ENCODE measurements at regions of chr14 and their contacts with region 1.

Region 1: GRCh38 chr14:67704484-67705089 is 2.9 kb downstream of the RDH12 start:
- DNase-seq: no peak
- ATAC-seq: peak; percentile 92

Region 2: DNA sequence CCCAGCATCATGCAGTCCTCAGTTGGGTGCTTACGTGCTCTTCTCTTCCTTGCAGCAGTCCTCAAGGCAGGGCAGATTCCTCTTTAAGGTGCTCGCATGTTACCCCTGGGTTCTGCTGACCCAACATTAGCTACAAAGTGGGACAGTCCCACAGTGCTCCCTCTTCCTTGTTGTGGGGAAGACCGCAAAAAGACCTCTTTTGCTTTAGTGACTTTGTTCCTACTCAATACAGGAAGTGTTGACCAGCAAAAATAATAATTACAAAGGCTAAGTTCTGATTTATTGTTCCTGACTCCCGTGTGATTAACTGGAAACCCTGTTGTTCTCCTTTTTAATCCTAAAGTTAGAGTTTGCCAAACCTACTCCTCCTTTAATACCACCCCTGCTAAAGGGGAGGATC is 118.2 kb before region 1 on chr14:
- intact Hi-C with region 1: loop called (anchors 5 kb)
- DNase-seq: no peak
- ATAC-seq: no peak

Measured in Right ventricle myocardium superior (tissue), 1 donor.